ENCODE measurements at regions of chr6 and their contacts with region 1.

Region 1: GRCh38 chr6:154276810-154277628 is 79.6 kb downstream of the IPCEF1 start:
- DNase-seq: no peak
- ATAC-seq: peak in 1 of 2 donors; percentile 66
- H3K4me3 ChIP-seq: peak overlapping the region; percentile 12
- H3K27ac ChIP-seq: no peak overlapping the region
- H3K4me1 ChIP-seq: peaks cover 6% of the 10 kb centered on the region
- H3K27me3 ChIP-seq: no peaks in the 10 kb centered on the region
- CTCF ChIP-seq: peak; percentile 65

Region 2: GRCh38 chr6:154154359-154154967 is 122.6 kb before region 1 on chr6:
- intact Hi-C with region 1: loop called (anchors 5 kb)
- DNase-seq: no peak
- ATAC-seq: peak; percentile 51 to 57
- H3K4me3 ChIP-seq: no peak overlapping the region
- H3K27ac ChIP-seq: no peak overlapping the region
- H3K4me1 ChIP-seq: peaks cover 19% of the 10 kb centered on the region
- H3K27me3 ChIP-seq: no peaks in the 10 kb centered on the region
- CTCF ChIP-seq: peak; percentile 79

Region 3: GRCh38 chr6:154229786-154230185 is 47.2 kb before region 1 on chr6:
- intact Hi-C with region 1: no loop called
- DNase-seq: no peak
- ATAC-seq: peak; percentile 58 to 72
- H3K4me3 ChIP-seq: no peak overlapping the region
- H3K27ac ChIP-seq: no peak overlapping the region
- H3K4me1 ChIP-seq: no peaks in the 10 kb centered on the region
- H3K27me3 ChIP-seq: no peaks in the 10 kb centered on the region
- CTCF ChIP-seq: no peak